PC-3 (cell line): ENCODE measurements at regions of chr12 and their contacts with region 1.

Region 1: GRCh38 chr12:55745361-55746146 is 2.6 kb downstream of the GDF11 start:
- DNase-seq: no peak
- ATAC-seq: no peak
- H3K4me3 ChIP-seq: no peak overlapping the region
- H3K27ac ChIP-seq: no peak overlapping the region
- H3K4me1 ChIP-seq: peaks cover 13% of the 10 kb centered on the region; the same call in 1 of the 2 replicates
- H3K27me3 ChIP-seq: no peaks in the 10 kb centered on the region
- CTCF ChIP-seq: no peak

Region 2: GRCh38 chr12:55548756-55549155 is 196.8 kb before region 1 on chr12:
- CTCF ChIA-PET with region 1: no interaction called
- POLR2A ChIA-PET with region 1: no interaction called
- intact Hi-C with region 1: no loop called
- DNase-seq: no peak
- ATAC-seq: no peak
- H3K4me3 ChIP-seq: no peak overlapping the region
- H3K27ac ChIP-seq: no peak overlapping the region
- H3K4me1 ChIP-seq: no peaks in the 10 kb centered on the region
- H3K27me3 ChIP-seq: peaks cover 10% of the 10 kb centered on the region; the same call in 1 of the 2 replicates
- CTCF ChIP-seq: no peak

Region 3: DNA sequence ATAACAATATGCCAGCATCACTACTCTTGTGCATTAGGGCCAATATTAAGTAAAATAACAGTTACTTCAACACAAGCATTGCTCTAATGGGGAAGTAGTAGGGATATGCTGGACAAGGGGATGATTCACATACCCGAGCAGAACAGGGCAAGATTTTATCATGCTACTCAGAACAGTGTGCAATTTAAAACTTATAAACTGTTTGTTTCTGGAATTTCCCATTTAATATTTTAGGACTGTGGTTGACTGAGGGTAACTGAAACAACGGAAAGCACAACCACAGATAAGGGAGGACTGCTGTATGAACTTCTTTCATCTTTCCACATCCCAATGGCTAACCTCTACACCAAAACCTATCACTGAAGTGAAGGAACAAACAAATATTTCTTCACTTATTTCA is 35.1 kb after region 1 on chr12:
- CTCF ChIA-PET with region 1: no interaction called
- POLR2A ChIA-PET with region 1: interaction called, 12 read pairs
- intact Hi-C with region 1: no loop called
- DNase-seq: no peak
- ATAC-seq: no peak
- H3K4me3 ChIP-seq: no peak overlapping the region
- H3K27ac ChIP-seq: no peak overlapping the region
- H3K4me1 ChIP-seq: no peaks in the 10 kb centered on the region
- H3K27me3 ChIP-seq: no peaks in the 10 kb centered on the region
- CTCF ChIP-seq: no peak